Prostate gland (tissue), 2 donors: ENCODE measurements at regions of chr12 and their contacts with region 1.

Region 1: DNA sequence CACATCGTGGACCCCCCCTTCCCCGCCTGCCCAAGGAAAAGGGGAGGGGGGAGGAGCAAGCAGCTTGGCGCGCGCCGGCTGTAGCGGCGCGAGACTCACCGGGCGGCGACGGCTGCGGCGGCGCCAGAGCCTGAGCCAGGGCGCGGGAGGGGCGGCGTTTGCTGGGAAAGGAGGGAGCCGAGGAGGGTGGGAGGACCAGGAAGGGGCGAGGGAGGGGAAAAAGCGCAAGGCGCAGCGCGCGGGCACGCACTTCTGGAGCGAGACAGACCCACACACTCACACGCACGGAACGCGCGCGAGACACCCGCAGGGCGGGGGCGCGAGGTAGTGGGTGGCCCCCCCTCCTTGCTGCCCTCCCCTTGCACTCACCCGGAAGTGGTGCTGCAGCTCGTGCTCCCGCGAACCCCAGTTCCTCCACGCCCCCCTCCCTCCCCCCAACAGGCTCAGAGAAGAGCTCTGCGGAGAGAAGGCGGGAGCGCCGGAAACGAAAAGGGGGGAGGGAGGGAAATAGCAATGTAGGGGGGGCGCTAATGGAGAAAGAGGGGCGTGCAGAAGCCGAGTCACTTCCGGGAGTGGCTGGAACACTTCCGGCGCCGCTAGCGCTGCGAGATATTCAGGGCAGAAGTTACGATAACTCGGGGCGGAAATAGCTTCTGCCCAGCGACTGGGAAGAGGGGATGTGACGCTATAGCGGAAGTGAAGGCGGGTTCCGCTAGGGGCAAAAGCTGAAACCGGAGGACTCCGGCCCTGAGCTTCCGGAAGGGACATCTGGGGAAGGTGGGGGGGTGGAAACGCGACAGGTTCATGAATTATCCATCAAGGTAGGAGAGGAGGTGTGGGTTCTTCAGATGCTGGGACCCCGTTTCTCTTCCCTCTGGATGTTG is at the start of gene ZNF384:
- DNase-seq: peak; percentile 99
- H3K4me3 ChIP-seq: peak within 1 kb of the TSS; percentile 61 to 81
- H3K27ac ChIP-seq: peak within 1 kb of the TSS; percentile 90 to 94
- H3K4me1 ChIP-seq: no peaks in the 10 kb centered on the region
- H3K27me3 ChIP-seq: no peaks in the 10 kb centered on the region
- CTCF ChIP-seq: peak in 2 of 4 experiments; percentile 53 to 79
- POLR2A ChIP-seq: peak; percentile 27
- total RNA-seq, gene ZNF384: 42.9 to 68.6 TPM

Region 2: GRCh38 chr12:6662906-6663742 is 26.1 kb before region 1 on chr12 and contains the start of gene ING4:
- intact Hi-C with region 1: loop called (anchors 1 kb)
- DNase-seq: peak; percentile 100
- H3K4me3 ChIP-seq: peak within 1 kb of the TSS; percentile 55 to 83
- H3K27ac ChIP-seq: peak within 1 kb of the TSS; percentile 78
- H3K4me1 ChIP-seq: no peaks in the 10 kb centered on the region
- H3K27me3 ChIP-seq: no peaks in the 10 kb centered on the region
- CTCF ChIP-seq: no peak
- POLR2A ChIP-seq: peak; percentile 45
- total RNA-seq, gene ING4: 75.5 to 78.9 TPM

Region 3: GRCh38 chr12:6723607-6724396 is 34.6 kb after region 1 on chr12 and contains the start of gene COPS7A:
- intact Hi-C with region 1: loop called (anchors 1 kb)
- DNase-seq: peak; percentile 98
- H3K4me3 ChIP-seq: peak within 1 kb of the TSS; percentile 49 to 59
- H3K27ac ChIP-seq: peak within 1 kb of the TSS; percentile 73 to 76
- H3K4me1 ChIP-seq: no peaks in the 10 kb centered on the region
- H3K27me3 ChIP-seq: no peaks in the 10 kb centered on the region
- CTCF ChIP-seq: peak in 2 of 4 experiments; percentile 17 to 30
- POLR2A ChIP-seq: peak; percentile 64
- total RNA-seq, gene COPS7A: 92.0 to 92.6 TPM